Activated B cell treated with CpG ODN at 0.5 μM for 24 hours (primary cell): ENCODE measurements at regions of chr1 and their contacts with region 1.

Region 1: DNA sequence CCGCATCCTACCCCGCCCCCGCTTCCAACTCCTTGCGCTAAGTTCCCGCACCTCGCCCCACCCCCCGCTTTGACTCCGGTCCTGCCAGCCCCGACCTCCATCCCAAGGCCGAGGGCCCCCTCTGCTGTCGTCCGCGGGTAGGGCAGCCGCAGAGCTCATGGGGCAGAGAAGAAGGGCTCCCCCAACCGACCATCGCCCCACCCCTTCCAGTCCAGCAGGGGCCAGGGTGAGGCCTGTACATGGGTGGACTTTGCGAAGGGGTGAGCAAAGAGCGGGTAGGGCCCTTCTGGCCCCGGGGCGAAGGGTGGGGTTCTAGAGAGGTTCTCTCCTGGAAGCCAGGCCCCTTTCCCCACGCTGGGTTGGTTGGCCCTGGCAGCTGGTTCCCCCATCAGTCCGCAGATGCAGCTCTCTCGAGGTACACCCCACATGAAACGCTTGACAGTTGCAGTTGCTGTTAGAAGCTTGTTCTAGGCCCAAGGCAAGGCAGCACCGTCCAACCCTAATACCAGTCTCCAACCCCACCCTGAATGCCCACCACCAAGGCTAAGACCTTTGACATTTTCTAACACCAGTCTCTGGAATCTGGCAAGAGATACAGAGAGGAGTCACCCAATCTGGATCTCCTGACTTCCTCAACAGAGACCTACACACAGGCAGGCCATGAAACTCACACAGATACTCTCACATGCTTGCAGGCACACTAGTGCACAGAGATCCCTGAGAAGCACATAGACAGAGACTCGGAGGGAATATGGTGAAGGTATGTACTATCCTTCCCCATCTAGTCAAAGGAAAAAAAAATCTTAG is 25.3 kb upstream of the ADGRB2 start:
- DNase-seq: peak; percentile 99
- ATAC-seq: peak; percentile 74
- H3K4me3 Mint-ChIP-seq: peak overlapping the region; percentile 88
- H3K27ac Mint-ChIP-seq: peak overlapping the region; percentile 98
- H3K4me1 Mint-ChIP-seq: peaks cover 40% of the 10 kb centered on the region
- H3K27me3 Mint-ChIP-seq: peaks cover 4% of the 10 kb centered on the region
- CTCF ChIP-seq: no peak

Region 2: GRCh38 chr1:31422505-31423319 is 366.8 kb before region 1 on chr1:
- CTCF ChIA-PET with region 1: no interaction called
- POLR2A ChIA-PET with region 1: no interaction called
- intact Hi-C with region 1: loop called (anchors 10 kb)
- DNase-seq: peak; percentile 70
- ATAC-seq: peak; percentile 53
- H3K4me3 Mint-ChIP-seq: peak overlapping the region; percentile 58
- H3K27ac Mint-ChIP-seq: peak overlapping the region; percentile 73
- H3K4me1 Mint-ChIP-seq: peaks cover 25% of the 10 kb centered on the region
- H3K27me3 Mint-ChIP-seq: no peaks in the 10 kb centered on the region
- CTCF ChIP-seq: peak; percentile 78

Region 3: GRCh38 chr1:31617917-31618660 is 171.4 kb before region 1 on chr1:
- CTCF ChIA-PET with region 1: interaction called, 3 read pairs
- POLR2A ChIA-PET with region 1: no interaction called
- intact Hi-C with region 1: loop called (anchors 2 kb)
- DNase-seq: peak; percentile 67
- ATAC-seq: peak; percentile 85
- H3K4me3 Mint-ChIP-seq: peak overlapping the region; percentile 56
- H3K27ac Mint-ChIP-seq: no peak overlapping the region
- H3K4me1 Mint-ChIP-seq: peaks cover 19% of the 10 kb centered on the region
- H3K27me3 Mint-ChIP-seq: peaks cover 20% of the 10 kb centered on the region
- CTCF ChIP-seq: no peak

Region 4: GRCh38 chr1:31715087-31715872 is 74.2 kb before region 1 on chr1:
- CTCF ChIA-PET with region 1: interaction called, 41 read pairs
- POLR2A ChIA-PET with region 1: interaction called, 9 read pairs
- intact Hi-C with region 1: loop called (anchors 1 kb)
- DNase-seq: peak; percentile 33
- ATAC-seq: peak; percentile 74
- H3K4me3 Mint-ChIP-seq: peak overlapping the region; percentile 77
- H3K27ac Mint-ChIP-seq: no peak overlapping the region
- H3K4me1 Mint-ChIP-seq: peaks cover 13% of the 10 kb centered on the region
- H3K27me3 Mint-ChIP-seq: peaks cover 47% of the 10 kb centered on the region
- CTCF ChIP-seq: no peak

Region 5: GRCh38 chr1:31831397-31832378 is 42.2 kb after region 1 on chr1:
- CTCF ChIA-PET with region 1: no interaction called
- POLR2A ChIA-PET with region 1: no interaction called
- intact Hi-C with region 1: no loop called
- DNase-seq: no peak
- ATAC-seq: no peak
- H3K4me3 Mint-ChIP-seq: no peak overlapping the region
- H3K27ac Mint-ChIP-seq: no peak overlapping the region
- H3K4me1 Mint-ChIP-seq: peaks cover 18% of the 10 kb centered on the region
- H3K27me3 Mint-ChIP-seq: no peaks in the 10 kb centered on the region
- CTCF ChIP-seq: no peak

Region 6: GRCh38 chr1:31938174-31938950 is 148.9 kb after region 1 on chr1 and contains the start of gene PTP4A2:
- CTCF ChIA-PET with region 1: interaction called, 10 read pairs
- POLR2A ChIA-PET with region 1: interaction called, 16 read pairs
- intact Hi-C with region 1: loop called (anchors 1 kb)
- DNase-seq: peak; percentile 88
- ATAC-seq: peak; percentile 78
- H3K4me3 Mint-ChIP-seq: peak within 1 kb of the TSS; percentile 91
- H3K27ac Mint-ChIP-seq: peak within 1 kb of the TSS; percentile 93
- H3K4me1 Mint-ChIP-seq: peaks cover 77% of the 10 kb centered on the region
- H3K27me3 Mint-ChIP-seq: no peaks in the 10 kb centered on the region
- CTCF ChIP-seq: no peak
- total RNA-seq, gene PTP4A2: 249 and 275 TPM in 2 replicates

Region 7: DNA sequence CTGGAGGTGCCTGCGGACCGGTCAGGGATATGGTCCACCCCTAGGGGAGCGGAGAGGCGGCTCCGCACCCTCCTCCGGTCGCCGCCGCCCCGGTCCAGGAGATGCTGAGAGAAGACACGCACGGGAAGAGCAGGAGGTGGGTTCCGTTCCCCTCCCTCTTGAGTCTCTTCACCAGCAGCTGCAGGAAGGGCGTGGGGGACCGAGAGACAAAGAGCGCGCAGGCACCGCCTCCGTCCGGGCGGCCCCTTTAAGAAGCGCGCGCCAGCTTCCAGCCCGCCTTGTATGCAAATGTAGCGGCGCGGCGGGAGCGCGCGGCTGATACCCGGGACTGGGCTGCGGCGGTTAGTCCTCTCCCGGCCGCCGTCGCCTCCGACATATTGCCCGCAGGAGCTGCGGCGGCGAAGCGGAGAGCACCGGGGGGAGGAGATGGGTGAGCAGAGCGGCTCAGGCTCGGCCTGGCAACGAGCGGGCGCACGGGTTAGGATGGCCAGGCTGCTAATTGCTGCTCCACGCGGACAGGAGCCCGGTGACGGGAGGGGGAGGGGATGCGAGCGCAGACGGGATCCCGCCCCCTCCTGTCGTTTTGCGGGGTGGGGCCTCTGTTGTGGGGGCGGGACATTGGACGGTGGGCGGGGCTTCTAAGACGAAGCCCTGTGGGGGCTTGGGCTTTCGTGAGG is 283.3 kb after region 1 on chr1 and contains the start of gene TMEM39B:
- CTCF ChIA-PET with region 1: no interaction called
- POLR2A ChIA-PET with region 1: interaction called, 3 read pairs
- intact Hi-C with region 1: loop called (anchors 2 kb)
- DNase-seq: peak; percentile 92
- ATAC-seq: peak; percentile 82
- H3K4me3 Mint-ChIP-seq: peak within 1 kb of the TSS; percentile 93
- H3K27ac Mint-ChIP-seq: peak within 1 kb of the TSS; percentile 95
- H3K4me1 Mint-ChIP-seq: peaks cover 35% of the 10 kb centered on the region
- H3K27me3 Mint-ChIP-seq: no peaks in the 10 kb centered on the region
- CTCF ChIP-seq: no peak
- total RNA-seq, gene TMEM39B: 23.1 and 23.8 TPM in 2 replicates